ENCODE measurements at regions of chr7 and their contacts with region 1.

Region 1: DNA sequence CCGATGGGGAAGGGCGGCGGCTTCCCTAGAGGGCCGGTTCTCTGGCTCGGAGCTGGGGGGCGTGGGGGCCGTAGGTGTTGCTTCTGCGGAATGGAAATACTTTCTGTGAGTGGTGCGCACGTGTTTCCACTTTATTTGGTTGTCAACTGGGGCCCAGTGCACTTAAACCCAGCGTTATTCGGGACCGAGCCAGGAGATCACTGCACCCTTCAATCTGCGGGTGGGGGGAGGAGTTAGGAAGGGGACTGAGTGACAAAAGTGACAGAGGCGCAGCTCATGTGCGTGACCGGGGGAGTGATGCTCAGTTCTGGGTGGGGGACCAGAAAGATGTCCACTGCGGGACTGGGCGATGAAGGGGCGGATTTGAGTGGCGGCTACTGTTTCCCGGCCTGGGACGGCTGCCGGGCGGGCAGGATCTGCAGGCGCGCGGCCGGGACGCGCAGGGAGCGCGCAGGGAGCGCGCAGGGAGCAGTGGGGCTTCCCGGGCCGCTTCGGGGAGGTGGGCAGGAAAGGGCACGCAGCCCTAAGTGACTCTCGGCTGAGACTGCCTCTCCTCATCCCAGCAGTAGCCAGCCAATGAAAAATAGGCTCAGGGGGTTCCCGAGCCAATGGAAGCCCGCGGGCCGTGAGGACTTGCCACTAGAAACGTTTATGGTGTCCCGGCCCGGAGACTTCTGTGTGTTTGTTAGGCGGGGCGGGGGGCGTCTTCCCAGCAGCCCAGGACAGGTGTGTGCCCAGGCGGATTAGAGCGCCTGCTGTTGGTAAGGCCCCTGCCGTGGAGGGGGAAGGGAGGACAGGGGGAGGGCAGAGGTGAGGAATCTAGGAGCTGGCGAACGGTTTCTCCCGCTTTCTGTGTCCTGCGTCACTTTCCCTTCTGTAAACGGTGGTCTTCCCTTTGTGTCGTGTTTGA is 54.3 kb upstream of the KDM7A start:
- H3K4me3 Mint-ChIP-seq: peak overlapping the region; percentile 95
- H3K27ac Mint-ChIP-seq: peak overlapping the region; percentile 97
- H3K4me1 Mint-ChIP-seq: peaks cover 56% of the 10 kb centered on the region
- H3K27me3 Mint-ChIP-seq: peaks cover 6% of the 10 kb centered on the region

Region 2: GRCh38 chr7:140209866-140210609 is 21.1 kb before region 1 on chr7:
- intact Hi-C with region 1: loop called (anchors 2 kb)
- H3K4me3 Mint-ChIP-seq: peak overlapping the region; percentile 62
- H3K27ac Mint-ChIP-seq: peak overlapping the region; percentile 99
- H3K4me1 Mint-ChIP-seq: peaks cover 84% of the 10 kb centered on the region
- H3K27me3 Mint-ChIP-seq: peaks cover 5% of the 10 kb centered on the region

Region 3: DNA sequence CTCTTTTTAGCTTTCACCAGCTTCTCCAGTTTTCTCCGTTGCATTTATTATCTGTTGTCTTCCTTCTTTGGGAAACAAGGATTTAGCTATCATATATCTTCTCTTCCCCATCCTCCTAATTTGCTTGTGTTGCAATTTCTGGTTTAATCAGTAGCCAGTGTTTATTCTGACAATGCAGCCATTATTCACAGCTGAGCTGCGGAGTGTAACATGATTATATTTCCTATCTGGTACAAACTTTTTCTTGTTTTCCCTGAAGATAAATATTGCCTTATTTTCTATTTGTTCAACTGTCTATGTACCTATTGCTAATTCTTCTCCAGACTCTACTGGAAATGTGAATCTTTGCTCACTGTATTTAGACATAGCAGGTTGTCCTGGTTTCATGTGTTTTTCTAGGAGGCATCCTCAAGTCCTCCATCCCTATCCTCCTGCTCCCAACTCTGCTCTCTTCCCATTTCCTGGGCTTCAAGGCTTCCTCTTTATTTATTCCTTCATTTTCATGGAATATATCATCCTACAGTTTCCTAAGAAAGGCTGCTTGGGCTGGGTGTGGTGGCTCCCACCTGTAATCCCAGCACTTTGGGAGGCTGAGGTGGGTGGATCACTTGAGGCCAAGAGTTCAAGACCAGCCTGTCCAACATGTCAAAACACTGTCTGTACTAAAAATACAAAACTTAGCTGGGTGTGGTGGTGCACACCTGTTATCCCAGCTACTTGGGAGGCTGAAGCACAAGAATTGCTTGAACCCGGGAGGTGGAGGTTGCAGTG is 18.1 kb after region 1 on chr7:
- intact Hi-C with region 1: loop called (anchors 2 kb)
- H3K4me3 Mint-ChIP-seq: no peak overlapping the region
- H3K27ac Mint-ChIP-seq: peak overlapping the region; percentile 95
- H3K4me1 Mint-ChIP-seq: peaks cover 64% of the 10 kb centered on the region
- H3K27me3 Mint-ChIP-seq: no peaks in the 10 kb centered on the region

Region 4: DNA sequence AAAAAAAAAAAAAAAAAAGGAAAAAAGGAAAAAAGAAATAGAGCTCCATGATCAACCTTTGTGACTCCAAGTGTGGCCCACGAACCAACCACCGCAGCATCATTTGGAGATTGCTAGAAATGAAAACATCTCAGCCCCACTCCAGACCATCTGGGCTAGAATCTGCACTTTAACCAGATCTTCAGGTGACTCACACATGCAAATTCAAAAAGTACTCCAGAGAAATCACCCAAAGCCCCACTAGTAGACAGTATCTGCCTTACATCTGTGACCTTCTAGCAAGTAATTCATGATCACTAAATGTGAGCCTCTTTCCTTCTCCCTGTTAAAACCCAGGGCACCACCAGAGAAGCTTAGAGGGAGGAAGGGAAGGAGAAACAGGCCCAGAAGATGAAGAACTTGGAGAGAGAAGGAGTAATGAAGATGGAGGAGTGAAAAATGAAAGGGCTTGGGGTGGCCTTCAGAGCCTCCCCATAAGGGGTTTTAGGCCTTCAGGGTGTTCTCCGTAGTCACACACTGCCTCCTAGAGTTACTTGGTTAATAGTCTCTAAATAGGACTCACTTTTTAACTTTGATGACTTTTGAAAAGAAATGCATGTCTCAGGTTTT is 73.2 kb after region 1 on chr7:
- intact Hi-C with region 1: loop called (anchors 1 kb)
- H3K4me3 Mint-ChIP-seq: peak overlapping the region; percentile 27
- H3K27ac Mint-ChIP-seq: peak overlapping the region; percentile 84
- H3K4me1 Mint-ChIP-seq: peaks cover 80% of the 10 kb centered on the region
- H3K27me3 Mint-ChIP-seq: no peaks in the 10 kb centered on the region

Region 5: DNA sequence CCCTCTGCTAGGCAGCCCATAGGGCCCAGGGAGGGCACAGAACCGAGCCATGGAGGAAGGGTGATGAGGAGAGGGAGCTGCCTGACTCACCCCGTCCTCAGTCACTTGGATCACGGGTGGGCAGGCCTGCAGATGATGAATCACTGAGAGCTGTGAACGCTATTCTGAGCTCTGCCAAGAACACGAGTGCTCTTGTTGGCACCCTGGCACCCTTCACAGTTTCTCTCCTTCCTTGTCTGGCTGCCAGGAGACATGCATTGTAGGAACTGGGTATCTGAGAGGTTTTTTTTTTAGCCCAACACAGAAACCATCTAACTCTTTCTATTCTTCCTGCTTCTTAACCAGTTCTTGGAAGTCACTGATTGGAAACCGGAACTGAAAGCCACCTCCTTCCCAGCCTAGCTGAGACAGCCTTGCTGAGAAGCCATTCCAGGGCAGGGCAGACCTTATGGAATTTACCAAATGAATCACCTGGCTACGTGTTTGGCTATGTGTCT is 85.1 kb after region 1 on chr7:
- intact Hi-C with region 1: loop called (anchors 5 kb)
- H3K4me3 Mint-ChIP-seq: peak overlapping the region; percentile 94
- H3K27ac Mint-ChIP-seq: peak overlapping the region; percentile 98
- H3K4me1 Mint-ChIP-seq: peaks cover 71% of the 10 kb centered on the region
- H3K27me3 Mint-ChIP-seq: no peaks in the 10 kb centered on the region

Measured in dendritic cell treated with granulocyte-macrophage colony-stimulating factor and Interleukin-4, amounts not matched to agents 40 ng/mL and 50 ng/mL, for 4 days (primary cell).